RWPE1 (cell line): ENCODE measurements at regions of chr15 and their contacts with region 1.

Region 1: DNA sequence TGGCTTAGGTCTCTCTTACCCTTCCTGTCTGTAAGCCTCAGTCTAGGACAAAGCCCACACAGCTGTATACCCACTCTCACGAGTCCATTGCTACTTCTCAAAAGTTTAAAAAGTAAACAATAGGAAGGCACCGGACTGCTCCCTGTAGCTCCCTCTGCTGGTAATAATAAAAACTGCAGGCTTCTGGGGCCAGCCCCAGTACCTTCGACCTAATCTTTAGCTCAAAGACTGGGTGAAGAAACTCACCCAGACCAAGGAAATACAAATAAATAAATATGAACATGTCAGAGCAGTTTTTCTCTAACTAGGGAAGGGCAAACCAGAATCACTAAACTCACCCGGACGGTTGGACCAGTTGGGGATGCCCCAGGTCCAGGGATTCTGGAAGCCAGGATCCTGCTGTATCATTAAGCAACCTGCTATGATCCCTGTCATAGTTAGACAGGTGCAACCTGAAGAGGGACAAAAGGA is 5.0 kb downstream of the FAM219B start:
- DNase-seq: peak; percentile 82
- H3K27ac ChIP-seq: no peak overlapping the region
- CTCF ChIP-seq: peak; percentile 99

Region 2: DNA sequence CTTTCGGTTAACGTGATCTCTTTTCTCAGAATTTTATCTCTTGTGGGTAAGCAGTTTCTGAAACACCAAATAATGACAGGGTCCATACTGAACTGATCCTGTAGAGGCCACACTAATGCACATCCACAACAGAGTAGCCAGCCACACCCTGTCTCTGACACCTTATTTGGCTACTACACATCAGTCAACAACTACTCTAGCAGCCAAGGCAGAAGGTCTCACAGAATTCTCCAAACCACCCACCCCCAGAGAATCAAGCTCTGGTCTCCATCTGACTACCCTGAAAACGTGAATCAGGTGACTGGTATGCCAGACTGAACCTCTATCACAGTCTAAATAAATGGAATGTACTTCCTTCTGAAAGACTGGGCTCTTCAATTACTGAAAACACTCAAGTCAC is 243.8 kb before region 1 on chr15:
- CTCF ChIA-PET with region 1: no interaction called
- POLR2A ChIA-PET with region 1: no interaction called
- DNase-seq: no peak
- H3K27ac ChIP-seq: no peak overlapping the region
- CTCF ChIP-seq: no peak

Region 3: GRCh38 chr15:74716644-74717043 is 185.0 kb before region 1 on chr15:
- CTCF ChIA-PET with region 1: no interaction called
- POLR2A ChIA-PET with region 1: no interaction called
- DNase-seq: no peak
- H3K27ac ChIP-seq: no peak overlapping the region
- CTCF ChIP-seq: no peak

Region 4: GRCh38 chr15:74816808-74817674 is 84.6 kb before region 1 on chr15:
- CTCF ChIA-PET with region 1: interaction called, 11 read pairs
- POLR2A ChIA-PET with region 1: interaction called, 3 read pairs
- DNase-seq: peak; percentile 76
- H3K27ac ChIP-seq: peak overlapping the region; percentile 84
- CTCF ChIP-seq: peak; percentile 68

Region 5: GRCh38 chr15:74842581-74843444 is 58.8 kb before region 1 on chr15 and contains the start of gene ULK3:
- CTCF ChIA-PET with region 1: interaction called, 11 read pairs
- POLR2A ChIA-PET with region 1: interaction called, 3 read pairs
- DNase-seq: peak; percentile 94
- H3K27ac ChIP-seq: peak within 1 kb of the TSS; percentile 81
- CTCF ChIP-seq: peak; percentile 98

Region 6: DNA sequence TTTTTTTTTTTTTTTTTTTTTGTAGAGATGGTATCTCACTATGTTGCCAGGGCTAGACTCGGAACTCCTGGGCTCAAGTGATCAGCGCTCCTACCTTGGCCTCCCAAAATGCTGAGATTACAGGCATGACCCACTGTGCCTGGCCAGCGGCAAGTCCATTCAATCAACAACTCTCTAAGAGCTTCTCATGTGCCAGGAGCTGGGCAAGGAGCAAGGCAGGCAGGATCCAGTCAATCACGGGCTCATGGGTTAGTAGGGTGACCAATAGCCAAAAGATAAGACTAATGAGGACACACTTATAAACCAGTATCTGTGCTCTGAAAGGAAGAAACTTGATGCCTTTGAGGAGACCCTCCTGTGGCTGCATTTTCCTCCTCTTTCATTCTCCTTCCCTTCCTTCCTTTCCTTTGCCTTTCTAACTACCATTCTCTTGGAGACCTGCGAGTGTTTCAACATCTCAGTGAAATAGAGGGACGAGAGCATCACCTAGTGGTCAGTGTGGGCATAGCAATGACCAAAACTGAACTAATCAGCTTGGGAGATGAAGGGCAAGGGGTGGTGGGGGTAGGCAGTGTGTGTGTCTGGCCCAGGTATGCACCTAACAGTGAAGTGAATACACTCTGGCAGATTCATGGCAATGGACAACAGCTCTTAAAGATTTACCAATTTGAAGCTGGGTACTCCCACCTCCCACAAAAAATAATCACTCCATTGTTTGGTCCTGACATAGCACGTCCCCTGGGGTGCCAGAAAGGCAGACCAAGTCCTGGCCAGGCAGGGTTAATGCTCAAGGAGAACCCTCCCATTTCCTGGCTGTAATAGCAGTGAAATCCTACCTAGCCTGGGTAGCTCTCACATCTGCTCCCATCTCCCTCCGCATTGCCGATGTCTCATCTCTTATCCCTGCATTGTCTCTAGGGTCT is 48.7 kb after region 1 on chr15:
- CTCF ChIA-PET with region 1: interaction called, 12 read pairs
- POLR2A ChIA-PET with region 1: no interaction called
- DNase-seq: peak; percentile 78
- H3K27ac ChIP-seq: peak overlapping the region; percentile 63
- CTCF ChIP-seq: peak; percentile 100

Region 7: GRCh38 chr15:75029378-75030022 is 127.9 kb after region 1 on chr15:
- CTCF ChIA-PET with region 1: no interaction called
- POLR2A ChIA-PET with region 1: no interaction called
- DNase-seq: peak; percentile 92
- H3K27ac ChIP-seq: peak overlapping the region; percentile 90
- CTCF ChIP-seq: peak; percentile 95